H1 (cell line): ENCODE measurements at regions of chr12 and their contacts with region 1.

Region 1: GRCh38 chr12:39375206-39375808 is 67.6 kb downstream of the KIF21A start:
- DNase-seq: no peak
- H3K4me3 ChIP-seq: no peak overlapping the region
- H3K27ac ChIP-seq: no peak overlapping the region
- H3K4me1 ChIP-seq: peaks cover 0 to 5% (median 1%) of the 10 kb centered on the region in 4 experiments; a peak in 2 of 7 replicates
- H3K27me3 ChIP-seq: no peaks in the 10 kb centered on the region
- CTCF ChIP-seq: peak in 2 of 3 experiments; percentile 6 to 62; a peak in 2 of 4 replicates
- EP300 ChIP-seq: no peak
- POLR2A ChIP-seq: no peak
- RAD21 ChIP-seq: peak; percentile 31 to 40; a peak in 3 of 4 replicates

Region 2: GRCh38 chr12:39199351-39199750 is 176.0 kb before region 1 on chr12:
- CTCF ChIA-PET with region 1: no interaction called
- POLR2A ChIA-PET with region 1: no interaction called
- DNase-seq: no peak
- H3K4me3 ChIP-seq: no peak overlapping the region
- H3K27ac ChIP-seq: no peak overlapping the region
- H3K4me1 ChIP-seq: no peaks in the 10 kb centered on the region; a peak in 1 of 7 replicates
- H3K27me3 ChIP-seq: no peaks in the 10 kb centered on the region
- CTCF ChIP-seq: no peak
- EP300 ChIP-seq: no peak
- POLR2A ChIP-seq: no peak
- RAD21 ChIP-seq: no peak

Region 3: DNA sequence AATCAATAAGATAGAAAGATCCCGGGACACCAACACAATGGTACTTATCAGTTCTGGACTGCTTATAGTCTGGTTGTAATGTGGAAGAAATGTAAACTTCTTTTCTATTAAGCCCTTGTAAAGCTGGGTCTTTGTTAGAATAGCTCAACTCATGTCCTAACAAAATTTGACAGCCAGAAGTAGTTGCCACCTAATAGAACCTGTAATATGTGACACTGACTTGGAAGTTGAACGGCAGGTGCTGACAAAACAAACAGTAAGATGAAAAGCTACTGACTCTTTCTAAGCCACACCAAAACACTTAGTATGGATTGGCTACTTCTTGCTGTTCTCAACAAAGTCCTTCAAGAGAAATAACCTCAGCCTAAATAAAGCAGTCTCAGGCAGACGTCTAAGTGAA is 11.0 kb after region 1 on chr12:
- CTCF ChIA-PET with region 1: interaction called, 18 read pairs
- POLR2A ChIA-PET with region 1: interaction called, 4 read pairs
- DNase-seq: no peak
- H3K4me3 ChIP-seq: no peak overlapping the region
- H3K27ac ChIP-seq: no peak overlapping the region
- H3K4me1 ChIP-seq: peaks cover 0 to 2% (median 0%) of the 10 kb centered on the region in 4 experiments; a peak in 2 of 7 replicates
- H3K27me3 ChIP-seq: no peaks in the 10 kb centered on the region
- CTCF ChIP-seq: no peak
- EP300 ChIP-seq: no peak
- POLR2A ChIP-seq: no peak
- RAD21 ChIP-seq: no peak

Region 4: DNA sequence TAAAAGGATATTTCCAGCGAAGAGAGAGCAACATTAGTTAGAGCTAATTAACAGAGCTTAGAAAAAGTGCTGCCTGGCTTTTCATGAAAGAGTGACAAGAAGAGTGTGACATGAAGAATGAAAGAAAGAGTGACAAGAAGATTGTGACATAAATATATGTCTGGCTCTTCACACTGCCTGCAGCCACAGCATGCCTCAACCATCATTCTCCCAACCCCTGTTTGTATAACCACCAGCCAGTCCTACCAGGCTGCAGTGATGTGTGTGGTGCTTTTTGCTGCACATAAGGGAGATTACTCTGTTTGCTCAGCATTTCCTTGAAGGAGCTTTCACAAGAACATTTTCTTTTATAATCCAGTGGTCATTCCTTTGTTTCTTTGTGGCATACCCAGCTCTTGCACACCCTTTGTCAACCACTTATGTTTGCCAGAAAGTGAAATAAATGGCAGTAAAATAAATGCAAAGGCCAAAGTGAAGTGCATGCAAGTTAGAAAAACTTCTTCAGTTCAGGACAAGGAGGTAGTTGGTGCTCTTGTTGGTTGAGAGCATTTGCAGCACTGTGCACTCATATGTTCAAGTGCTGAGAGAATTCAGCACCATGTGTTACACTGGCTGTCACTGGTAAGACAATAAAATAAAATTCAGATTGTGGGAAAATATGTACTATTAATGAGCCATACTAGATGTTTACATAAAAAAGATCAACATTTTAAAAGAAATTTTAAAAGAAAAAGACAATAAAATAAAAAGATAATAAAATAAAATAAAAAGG is 17.0 kb after region 1 on chr12:
- CTCF ChIA-PET with region 1: interaction called, 18 read pairs
- POLR2A ChIA-PET with region 1: interaction called, 6 read pairs
- DNase-seq: no peak
- H3K4me3 ChIP-seq: no peak overlapping the region
- H3K27ac ChIP-seq: no peak overlapping the region
- H3K4me1 ChIP-seq: peaks cover 2 to 18% (median 15%) of the 10 kb centered on the region in 4 experiments; a peak in 5 of 7 replicates
- H3K27me3 ChIP-seq: no peaks in the 10 kb centered on the region
- CTCF ChIP-seq: no peak
- EP300 ChIP-seq: no peak
- POLR2A ChIP-seq: no peak
- RAD21 ChIP-seq: no peak